ENCODE measurements at regions of chr11 and their contacts with region 1.

Region 1: DNA sequence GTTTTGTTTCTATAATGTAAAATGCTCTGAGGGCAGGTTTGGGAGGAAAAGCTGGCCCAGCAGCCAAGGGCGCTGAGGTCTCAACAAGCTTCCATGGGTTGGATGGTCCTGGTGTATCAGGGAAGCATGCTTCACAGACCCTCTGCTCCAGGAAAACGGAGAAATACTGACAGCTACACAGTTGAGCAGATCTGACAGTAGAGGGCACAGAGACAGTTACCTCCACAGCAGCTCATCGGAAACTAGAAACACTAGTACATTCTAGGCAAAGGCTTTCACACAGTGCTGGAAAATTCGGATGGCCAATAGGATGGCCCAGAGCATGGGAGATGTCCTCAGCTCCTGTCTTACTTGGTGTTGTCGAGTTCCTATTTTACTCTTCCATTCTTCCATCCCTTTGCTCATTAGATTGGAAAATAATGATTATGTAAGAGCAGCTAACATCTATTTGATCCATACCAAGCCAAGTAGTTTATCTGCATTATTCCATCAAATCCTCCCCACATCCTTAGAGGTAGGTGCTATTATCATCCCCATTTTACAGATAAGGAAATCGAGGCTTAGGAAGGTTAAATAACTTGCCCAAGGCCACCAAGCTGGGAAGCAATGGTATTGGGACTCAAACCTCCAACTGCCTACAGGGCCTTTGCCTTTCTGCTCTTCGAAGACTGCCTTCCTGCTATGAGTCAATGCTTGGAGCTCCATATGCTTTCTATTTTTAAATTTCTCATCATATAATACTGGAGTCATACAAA is 28.3 kb downstream of the LMO2 start:
- DNase-seq: no peak
- H3K4me3 Mint-ChIP-seq: no peak overlapping the region
- H3K27ac Mint-ChIP-seq: no peak overlapping the region
- H3K4me1 Mint-ChIP-seq: peaks cover 5% of the 10 kb centered on the region
- H3K27me3 Mint-ChIP-seq: peaks cover 41% of the 10 kb centered on the region

Region 2: DNA sequence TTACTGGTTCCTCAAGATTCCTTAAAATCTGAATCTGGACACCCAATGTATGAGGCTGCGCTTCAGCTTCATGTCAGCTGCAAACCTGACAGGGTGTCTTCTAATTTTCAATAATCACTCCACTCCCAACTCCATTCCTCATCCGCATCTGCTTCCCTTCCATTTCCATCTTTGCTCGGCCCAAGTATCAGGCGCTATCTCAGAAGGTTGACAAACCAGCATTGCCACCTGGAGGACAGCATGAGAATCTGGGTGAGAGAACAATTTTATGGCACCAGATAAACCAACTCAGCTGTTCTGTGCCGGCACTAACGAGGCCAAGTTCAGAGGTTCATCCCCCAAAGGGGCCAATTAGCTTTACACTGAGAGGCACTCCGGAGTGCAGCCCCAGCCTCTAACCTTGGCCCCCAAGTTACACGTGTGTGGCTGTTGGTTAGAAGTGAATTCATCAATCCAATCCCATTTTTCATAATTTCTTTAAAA is 107.4 kb after region 1 on chr11:
- CTCF ChIA-PET with region 1: interaction called, 21 read pairs
- intact Hi-C with region 1: loop called (anchors 1 kb)
- DNase-seq: peak; percentile 48
- H3K4me3 Mint-ChIP-seq: no peak overlapping the region
- H3K27ac Mint-ChIP-seq: no peak overlapping the region
- H3K4me1 Mint-ChIP-seq: peaks cover 2% of the 10 kb centered on the region
- H3K27me3 Mint-ChIP-seq: peaks cover 7% of the 10 kb centered on the region

Region 3: GRCh38 chr11:34006876-34007275 is 143.3 kb after region 1 on chr11:
- CTCF ChIA-PET with region 1: no interaction called
- intact Hi-C with region 1: no loop called
- DNase-seq: no peak
- H3K4me3 Mint-ChIP-seq: no peak overlapping the region
- H3K27ac Mint-ChIP-seq: no peak overlapping the region
- H3K4me1 Mint-ChIP-seq: no peaks in the 10 kb centered on the region
- H3K27me3 Mint-ChIP-seq: peaks cover 5% of the 10 kb centered on the region

Measured in activated naive CD4-positive, alpha-beta T cell treated with anti-CD3 and anti-CD28 coated beads for 36 hours (primary cell).